HepG2 (cell line): ENCODE measurements at regions of chr3 and their contacts with region 1.

Region 1: GRCh38 chr3:170357176-170357919 is at the start of gene SKIL:
- DNase-seq: peak; percentile 82
- ATAC-seq: peak; percentile 65
- H3K4me3 ChIP-seq: peak within 1 kb of the TSS; percentile 92 to 94 (median 93)
- H3K27ac ChIP-seq: peak within 1 kb of the TSS; percentile 94
- H3K4me1 ChIP-seq: peaks cover 59% of the 10 kb centered on the region
- H3K27me3 ChIP-seq: no peaks in the 10 kb centered on the region; a peak in 2 of 5 replicates
- CTCF ChIP-seq: peak; percentile 18; the same call in 1 of the 2 replicates
- EP300 ChIP-seq: no peak
- POLR2A ChIP-seq: peak; percentile 40 to 49; a peak in 2 of 4 replicates
- RAD21 ChIP-seq: peak; percentile 44
- total RNA-seq, gene SKIL: 20.7 and 29.8 TPM in 2 replicates

Region 2: DNA sequence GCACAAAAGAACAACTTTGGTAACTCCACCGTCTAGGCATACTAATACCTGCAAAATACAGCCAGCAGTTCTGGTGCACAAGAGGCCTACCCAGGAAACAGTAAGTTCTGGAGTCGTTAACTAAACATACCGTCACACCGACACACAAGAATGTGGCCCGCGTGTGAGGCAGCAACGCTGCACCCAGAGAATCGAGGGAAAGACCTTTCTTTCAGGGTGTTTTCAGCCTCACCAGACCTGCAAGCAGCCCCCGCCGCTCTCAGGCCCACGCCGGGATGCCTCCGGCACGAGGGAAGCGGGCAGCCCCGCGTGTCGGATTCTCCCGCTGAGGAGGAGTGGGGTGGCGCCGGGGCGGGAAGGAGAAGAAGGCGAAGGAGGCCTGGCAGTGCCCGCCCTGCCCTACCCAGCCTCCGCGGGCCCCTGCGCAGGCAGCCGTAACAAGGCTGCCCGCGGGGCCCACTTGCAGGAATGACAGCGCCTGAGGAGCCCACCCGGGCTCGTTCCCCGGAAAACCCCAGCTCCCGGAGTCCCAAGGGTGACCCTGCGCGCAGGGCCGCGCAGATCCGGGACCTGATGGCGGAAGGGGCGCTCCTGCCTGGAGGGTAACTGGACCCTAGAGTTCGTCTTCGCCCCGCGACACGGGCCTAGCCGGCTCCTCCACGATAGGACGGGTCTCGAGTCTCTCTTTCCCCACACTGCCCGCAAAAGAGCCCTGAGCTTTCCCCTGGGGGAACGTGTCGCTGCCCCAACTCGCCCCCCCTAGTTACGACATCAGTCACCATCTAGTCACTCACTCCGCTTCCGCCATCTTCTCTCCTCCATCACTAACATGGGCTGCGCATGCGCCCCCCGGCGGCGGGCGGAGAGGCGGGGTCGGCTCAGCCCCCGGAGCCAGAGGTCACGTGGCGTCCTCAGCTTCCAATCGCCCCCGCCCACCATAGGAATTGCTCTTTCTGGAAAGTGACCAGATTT is 176.2 kb before region 1 on chr3 and contains the start of gene PHC3:
- CTCF ChIA-PET with region 1: no interaction called
- POLR2A ChIA-PET with region 1: interaction called, 3 read pairs
- in situ Hi-C with region 1: no loop called
- intact Hi-C with region 1: loop called (anchors 2 kb)
- DNase-seq: peak; percentile 87
- ATAC-seq: peak; percentile 86
- H3K4me3 ChIP-seq: peak within 1 kb of the TSS; percentile 87 to 99 (median 98)
- H3K27ac ChIP-seq: peak within 1 kb of the TSS; percentile 78
- H3K4me1 ChIP-seq: peaks cover 35% of the 10 kb centered on the region
- H3K27me3 ChIP-seq: no peaks in the 10 kb centered on the region; a peak in 1 of 5 replicates
- CTCF ChIP-seq: peak; percentile 60
- EP300 ChIP-seq: no peak
- POLR2A ChIP-seq: peak; percentile 79 to 86
- RAD21 ChIP-seq: no peak
- total RNA-seq, gene PHC3: 16.5 and 24.1 TPM in 2 replicates

Region 3: DNA sequence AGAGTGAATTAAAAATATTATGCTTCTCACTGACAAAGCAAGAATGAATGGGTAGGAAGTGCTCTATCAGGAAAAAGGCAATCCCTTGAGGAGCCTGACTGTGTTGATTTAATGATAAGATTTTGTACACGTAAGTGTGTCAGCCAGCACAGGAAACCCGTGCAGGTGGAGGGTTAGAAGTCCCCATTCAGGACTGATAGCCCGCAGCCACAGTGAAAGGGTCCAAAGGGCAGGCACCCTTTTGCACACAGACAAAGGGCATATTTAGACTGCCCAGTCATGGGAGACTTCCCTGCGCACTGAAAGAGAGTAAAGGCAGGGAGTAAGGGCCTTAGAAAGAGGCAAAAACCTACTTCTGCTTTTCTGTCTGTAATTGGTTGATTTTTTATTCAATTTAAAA is 26.2 kb before region 1 on chr3:
- CTCF ChIA-PET with region 1: no interaction called
- POLR2A ChIA-PET with region 1: interaction called, 8 read pairs
- in situ Hi-C with region 1: no loop called
- intact Hi-C with region 1: loop called (anchors 1 kb)
- DNase-seq: peak; percentile 95
- ATAC-seq: peak; percentile 98
- H3K4me3 ChIP-seq: peak overlapping the region in 1 of 3 experiments; percentile 2; a peak in 2 of 6 replicates
- H3K27ac ChIP-seq: peak overlapping the region; percentile 82
- H3K4me1 ChIP-seq: peaks cover 34% of the 10 kb centered on the region
- H3K27me3 ChIP-seq: no peaks in the 10 kb centered on the region
- CTCF ChIP-seq: no peak
- EP300 ChIP-seq: peak; percentile 70 to 85
- POLR2A ChIP-seq: no peak
- RAD21 ChIP-seq: peak; percentile 49; the same call in 1 of the 2 replicates